CD8-positive, alpha-beta T cell (primary cell): ENCODE measurements at regions of chr19 and their contacts with region 1.

Region 1: GRCh38 chr19:54231077-54231931 is 8.5 kb upstream of the LILRB3 start:
- DNase-seq: peak; percentile 75 to 93 (median 87)
- ATAC-seq: peak; percentile 98
- H3K4me3 ChIP-seq: no peak overlapping the region
- H3K4me3 Mint-ChIP-seq: no peak overlapping the region
- H3K27ac ChIP-seq: no peak overlapping the region
- H3K27ac Mint-ChIP-seq: no peak overlapping the region
- H3K4me1 ChIP-seq: no peaks in the 10 kb centered on the region
- H3K4me1 Mint-ChIP-seq: no peaks in the 10 kb centered on the region
- H3K27me3 ChIP-seq: peaks cover 0 to 3% of the 10 kb centered on the region in 2 experiments
- H3K27me3 Mint-ChIP-seq: peaks cover 13% of the 10 kb centered on the region
- CTCF ChIP-seq: peak; percentile 96

Region 2: GRCh38 chr19:53977991-53978731 is 253.1 kb before region 1 on chr19:
- CTCF ChIA-PET with region 1: no interaction called
- POLR2A ChIA-PET with region 1: no interaction called
- intact Hi-C with region 1: no loop called
- DNase-seq: peak in 3 of 9 experiments; percentile 7 to 53 (median 46)
- ATAC-seq: no peak
- H3K4me3 ChIP-seq: peak overlapping the region; percentile 41 to 60
- H3K4me3 Mint-ChIP-seq: peak overlapping the region; percentile 73
- H3K27ac ChIP-seq: no peak overlapping the region
- H3K27ac Mint-ChIP-seq: no peak overlapping the region
- H3K4me1 ChIP-seq: peaks cover 26% of the 10 kb centered on the region
- H3K4me1 Mint-ChIP-seq: peaks cover 29% of the 10 kb centered on the region
- H3K27me3 ChIP-seq: peaks cover 31 to 35% of the 10 kb centered on the region in 2 experiments
- H3K27me3 Mint-ChIP-seq: peaks cover 54% of the 10 kb centered on the region
- CTCF ChIP-seq: no peak

Region 3: GRCh38 chr19:54168174-54168917 is 63.0 kb before region 1 on chr19:
- CTCF ChIA-PET with region 1: interaction called, 33 read pairs
- POLR2A ChIA-PET with region 1: no interaction called
- intact Hi-C with region 1: loop called (anchors 1 kb)
- DNase-seq: peak; percentile 79 to 97 (median 90)
- ATAC-seq: peak; percentile 94
- H3K4me3 ChIP-seq: no peak overlapping the region
- H3K4me3 Mint-ChIP-seq: no peak overlapping the region
- H3K27ac ChIP-seq: no peak overlapping the region
- H3K27ac Mint-ChIP-seq: no peak overlapping the region
- H3K4me1 ChIP-seq: peaks cover 15% of the 10 kb centered on the region
- H3K4me1 Mint-ChIP-seq: peaks cover 10% of the 10 kb centered on the region
- H3K27me3 ChIP-seq: peaks cover 0 to 2% of the 10 kb centered on the region in 2 experiments
- H3K27me3 Mint-ChIP-seq: no peaks in the 10 kb centered on the region
- CTCF ChIP-seq: peak; percentile 79

Region 4: DNA sequence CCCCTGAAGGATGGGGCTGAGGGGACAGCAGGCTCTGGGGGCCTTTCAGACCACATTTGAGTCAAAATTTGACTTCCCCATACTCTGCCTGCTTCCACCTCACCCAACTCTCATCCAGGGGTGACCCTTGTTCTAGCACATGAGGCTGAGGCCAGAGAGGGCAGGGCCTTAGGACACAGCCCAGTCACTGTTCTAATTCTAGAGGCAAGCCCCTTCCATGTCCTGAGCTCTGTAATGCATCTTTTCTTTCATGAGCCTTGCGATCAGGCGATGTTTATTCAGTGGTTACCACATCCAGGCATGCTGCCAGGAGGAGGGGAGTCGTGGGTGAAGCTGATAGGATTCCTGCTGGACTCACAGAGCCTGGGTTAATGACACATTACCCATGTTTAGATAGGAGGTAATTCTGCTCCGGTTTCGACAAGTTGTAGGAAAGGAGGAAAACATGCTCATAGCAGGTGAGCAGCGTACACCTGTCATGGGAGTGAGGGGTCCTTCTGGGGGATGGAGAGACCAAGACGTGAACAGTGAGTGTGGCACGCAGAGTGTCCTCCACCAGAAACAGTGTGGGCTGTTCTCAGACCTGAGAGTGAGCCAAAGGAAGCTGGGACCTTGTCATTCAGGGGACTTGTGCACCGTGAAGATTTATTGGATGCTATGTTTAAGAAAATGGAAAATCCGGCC is 21.4 kb before region 1 on chr19:
- CTCF ChIA-PET with region 1: interaction called, 3 read pairs
- POLR2A ChIA-PET with region 1: no interaction called
- intact Hi-C with region 1: loop called in 1 of 2 experiments (anchors 1 kb)
- DNase-seq: peak in 4 of 9 experiments; percentile 41 to 71 (median 52)
- ATAC-seq: no peak
- H3K4me3 ChIP-seq: no peak overlapping the region
- H3K4me3 Mint-ChIP-seq: peak overlapping the region; percentile 46
- H3K27ac ChIP-seq: peak overlapping the region in 1 of 2 experiments; percentile 68
- H3K27ac Mint-ChIP-seq: peak overlapping the region; percentile 92
- H3K4me1 ChIP-seq: peaks cover 60% of the 10 kb centered on the region
- H3K4me1 Mint-ChIP-seq: peaks cover 58% of the 10 kb centered on the region
- H3K27me3 ChIP-seq: no peaks in the 10 kb centered on the region
- H3K27me3 Mint-ChIP-seq: no peaks in the 10 kb centered on the region
- CTCF ChIP-seq: no peak